ENCODE measurements at regions of chr1 and their contacts with region 1.

Region 1: DNA sequence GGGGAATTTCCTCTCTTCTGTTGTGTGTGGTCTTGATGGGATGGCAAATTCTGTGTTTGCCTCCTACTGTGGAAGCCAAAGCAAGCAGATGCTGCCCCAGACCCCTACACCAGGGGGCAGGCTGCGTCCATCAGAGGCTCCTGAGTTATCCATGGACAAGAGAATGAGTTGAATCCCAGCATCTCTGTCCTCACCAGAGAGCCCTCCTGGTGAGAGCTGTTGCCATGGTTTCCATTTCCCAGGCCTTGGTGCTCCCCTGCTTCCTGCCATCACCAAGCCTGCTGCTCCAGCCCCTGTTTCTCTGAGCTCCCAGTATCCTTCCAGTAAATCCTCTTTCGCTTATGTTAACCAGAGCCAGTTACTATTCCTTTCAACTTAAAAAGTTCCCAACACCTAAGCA is 20.4 kb upstream of the GNG12 start:
- DNase-seq: peak in 8 of 10 donors; percentile 47 to 92 (median 58)

Region 2: GRCh38 chr1:67874501-67875111 is 20.9 kb after region 1 on chr1:
- intact Hi-C with region 1: no loop called
- DNase-seq: no peak

Region 3: GRCh38 chr1:68111519-68112436 is 258.1 kb after region 1 on chr1:
- intact Hi-C with region 1: loop called (anchors 2 kb)
- DNase-seq: peak; percentile 50 to 96 (median 72)

Region 4: GRCh38 chr1:68346188-68346808 is 492.6 kb after region 1 on chr1:
- intact Hi-C with region 1: loop called (anchors 10 kb)
- DNase-seq: no peak